ENCODE measurements at regions of chr2 and their contacts with region 1.

Region 1: GRCh38 chr2:68653538-68653982 is 10.2 kb downstream of the PROKR1 start:
- DNase-seq: peak; percentile 88
- H3K4me3 Mint-ChIP-seq: peak overlapping the region; percentile 66
- H3K27ac Mint-ChIP-seq: peak overlapping the region; percentile 71
- H3K4me1 Mint-ChIP-seq: peaks cover 46% of the 10 kb centered on the region
- H3K27me3 Mint-ChIP-seq: peaks cover 36% of the 10 kb centered on the region

Region 2: DNA sequence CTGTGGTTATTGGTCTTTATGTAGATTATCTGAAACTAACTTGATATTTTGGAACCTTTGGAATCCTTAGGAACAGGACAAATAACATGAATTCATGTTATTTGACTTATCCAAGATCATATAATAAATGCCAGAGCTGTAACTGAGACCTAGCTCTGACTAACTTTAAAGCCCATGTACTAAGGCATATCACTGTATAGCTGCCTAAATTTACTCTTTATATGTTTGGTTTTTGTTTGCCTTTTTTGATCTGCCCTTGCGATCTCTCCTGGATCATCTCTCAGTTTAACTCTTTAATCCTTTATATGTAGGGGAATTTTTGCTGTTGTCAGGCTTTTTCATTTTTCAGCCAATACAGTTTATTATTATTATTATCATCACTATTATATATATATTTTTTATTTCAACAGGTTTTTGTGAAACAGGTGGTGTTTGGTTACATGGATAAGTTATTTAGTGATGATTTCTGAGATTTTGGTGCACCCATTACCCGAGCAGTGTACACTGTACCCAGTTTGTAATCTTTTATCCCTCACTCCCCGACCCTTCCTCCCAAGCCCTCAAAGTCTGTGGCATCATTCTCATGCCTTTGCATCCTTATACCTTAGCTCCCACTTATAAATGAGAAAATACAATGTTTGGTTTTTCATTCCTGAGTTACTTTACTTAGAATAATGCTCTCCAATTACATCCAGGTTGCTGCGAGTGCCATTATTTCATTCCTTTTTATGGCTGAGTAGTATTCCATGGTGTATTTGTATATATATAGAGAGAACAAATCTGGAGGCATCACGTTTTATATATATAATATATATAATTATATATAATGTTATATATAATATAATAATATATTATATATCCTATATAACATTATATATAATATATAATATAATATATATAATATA is 137.3 kb before region 1 on chr2:
- intact Hi-C with region 1: loop called (anchors 5 kb)
- DNase-seq: no peak
- H3K4me3 Mint-ChIP-seq: no peak overlapping the region
- H3K27ac Mint-ChIP-seq: no peak overlapping the region
- H3K4me1 Mint-ChIP-seq: peaks cover 9% of the 10 kb centered on the region
- H3K27me3 Mint-ChIP-seq: no peaks in the 10 kb centered on the region

Region 3: GRCh38 chr2:68663371-68664156 is 10.0 kb after region 1 on chr2:
- intact Hi-C with region 1: loop called (anchors 1 kb)
- DNase-seq: no peak
- H3K4me3 Mint-ChIP-seq: no peak overlapping the region
- H3K27ac Mint-ChIP-seq: no peak overlapping the region
- H3K4me1 Mint-ChIP-seq: peaks cover 9% of the 10 kb centered on the region
- H3K27me3 Mint-ChIP-seq: peaks cover 11% of the 10 kb centered on the region

Region 4: DNA sequence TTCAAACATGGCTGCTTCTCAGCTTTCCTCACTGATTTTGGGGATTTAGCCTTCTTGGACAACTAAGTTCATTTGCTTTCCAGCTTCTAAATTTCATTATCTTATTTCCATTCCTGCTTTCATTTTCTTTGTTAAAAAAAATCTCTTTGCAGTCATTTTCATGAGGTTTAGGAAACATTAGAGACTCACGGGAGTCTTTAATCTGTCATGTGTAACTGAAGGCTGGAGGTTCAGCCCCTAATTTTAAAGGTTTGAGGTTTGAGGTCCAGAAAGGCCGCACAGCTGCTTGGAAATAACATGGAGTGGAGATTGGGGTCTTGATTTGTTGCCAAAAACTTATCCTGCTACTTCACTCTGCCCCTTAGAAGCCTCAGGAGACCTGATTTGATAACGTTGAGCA is 20.1 kb after region 1 on chr2:
- intact Hi-C with region 1: no loop called
- DNase-seq: no peak
- H3K4me3 Mint-ChIP-seq: no peak overlapping the region
- H3K27ac Mint-ChIP-seq: no peak overlapping the region
- H3K4me1 Mint-ChIP-seq: peaks cover 4% of the 10 kb centered on the region
- H3K27me3 Mint-ChIP-seq: peaks cover 32% of the 10 kb centered on the region

Region 5: DNA sequence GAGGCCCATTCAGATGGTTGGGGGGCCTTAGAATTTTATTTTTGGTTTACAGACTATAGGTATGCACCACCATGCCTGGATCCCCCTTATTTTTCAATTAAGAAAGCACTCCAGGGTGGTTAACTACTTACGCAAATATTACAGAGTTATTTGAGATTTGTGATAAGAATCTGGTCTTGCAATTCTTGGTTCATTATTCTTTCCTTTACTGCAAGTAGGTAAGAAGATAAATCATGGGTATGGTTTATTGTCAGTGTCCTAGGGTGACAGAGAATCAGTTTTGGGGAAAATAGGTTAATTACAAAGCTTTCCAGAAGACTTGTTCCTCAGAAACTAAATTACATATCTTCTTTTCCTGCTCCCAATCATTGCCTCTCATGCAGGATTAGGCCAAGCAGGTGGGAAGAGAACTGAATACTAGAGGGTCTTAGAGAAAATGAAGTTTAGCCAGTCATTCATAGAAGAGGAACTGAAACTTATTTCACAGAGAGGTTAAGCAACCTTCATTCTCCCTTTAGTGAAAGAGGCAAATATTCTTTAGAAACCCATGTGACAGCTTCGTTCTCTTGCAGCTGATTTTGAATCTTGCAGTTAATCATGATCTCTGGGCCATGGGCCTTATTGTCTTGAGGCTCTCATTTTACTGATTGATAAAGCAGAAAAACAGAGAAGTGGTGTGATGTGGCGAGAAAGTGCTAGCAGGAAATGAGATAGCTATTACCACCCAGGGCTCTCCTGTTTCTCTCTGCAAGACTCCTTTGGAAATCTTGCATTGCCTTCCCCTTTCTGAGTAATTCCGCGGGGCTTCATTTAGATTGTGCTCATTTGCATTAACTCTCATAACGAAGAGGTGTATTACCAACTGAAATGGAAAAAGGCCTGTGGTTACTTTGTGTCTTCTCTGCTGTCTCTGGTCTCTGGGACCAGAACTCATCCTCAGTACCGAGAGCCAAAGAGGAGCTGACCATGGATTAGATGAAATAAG is 36.3 kb after region 1 on chr2:
- intact Hi-C with region 1: loop called (anchors 1 kb)
- DNase-seq: peak; percentile 63
- H3K4me3 Mint-ChIP-seq: peak overlapping the region; percentile 11
- H3K27ac Mint-ChIP-seq: peak overlapping the region; percentile 49
- H3K4me1 Mint-ChIP-seq: peaks cover 20% of the 10 kb centered on the region
- H3K27me3 Mint-ChIP-seq: peaks cover 8% of the 10 kb centered on the region

Region 6: DNA sequence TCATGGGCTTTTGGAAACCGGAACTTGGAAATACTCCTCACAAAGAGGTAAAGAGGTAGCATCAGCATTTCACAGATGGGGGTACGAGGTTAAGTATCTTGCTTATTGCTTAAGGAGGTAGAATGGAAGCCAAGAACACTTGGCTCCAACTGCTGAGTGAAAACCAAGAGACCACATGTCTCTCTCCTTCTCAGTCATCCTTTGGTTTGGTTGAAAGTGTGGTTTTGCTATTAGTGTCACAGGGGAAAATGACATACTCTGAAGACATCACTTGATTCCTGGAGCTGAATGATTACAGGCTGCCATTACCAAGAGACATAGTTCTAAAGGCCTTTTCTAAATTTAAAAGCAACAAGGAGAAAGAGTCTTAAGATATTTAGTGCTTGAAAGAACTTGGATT is 400.9 kb after region 1 on chr2:
- intact Hi-C with region 1: loop called (anchors 5 kb)
- DNase-seq: peak; percentile 64
- H3K4me3 Mint-ChIP-seq: no peak overlapping the region
- H3K27ac Mint-ChIP-seq: no peak overlapping the region
- H3K4me1 Mint-ChIP-seq: peaks cover 10% of the 10 kb centered on the region
- H3K27me3 Mint-ChIP-seq: peaks cover 53% of the 10 kb centered on the region